Activated naive CD4-positive, alpha-beta T cell treated with anti-CD3 and anti-CD28 coated beads for 36 hours (primary cell): ENCODE measurements at regions of chr2 and their contacts with region 1.

Region 1: DNA sequence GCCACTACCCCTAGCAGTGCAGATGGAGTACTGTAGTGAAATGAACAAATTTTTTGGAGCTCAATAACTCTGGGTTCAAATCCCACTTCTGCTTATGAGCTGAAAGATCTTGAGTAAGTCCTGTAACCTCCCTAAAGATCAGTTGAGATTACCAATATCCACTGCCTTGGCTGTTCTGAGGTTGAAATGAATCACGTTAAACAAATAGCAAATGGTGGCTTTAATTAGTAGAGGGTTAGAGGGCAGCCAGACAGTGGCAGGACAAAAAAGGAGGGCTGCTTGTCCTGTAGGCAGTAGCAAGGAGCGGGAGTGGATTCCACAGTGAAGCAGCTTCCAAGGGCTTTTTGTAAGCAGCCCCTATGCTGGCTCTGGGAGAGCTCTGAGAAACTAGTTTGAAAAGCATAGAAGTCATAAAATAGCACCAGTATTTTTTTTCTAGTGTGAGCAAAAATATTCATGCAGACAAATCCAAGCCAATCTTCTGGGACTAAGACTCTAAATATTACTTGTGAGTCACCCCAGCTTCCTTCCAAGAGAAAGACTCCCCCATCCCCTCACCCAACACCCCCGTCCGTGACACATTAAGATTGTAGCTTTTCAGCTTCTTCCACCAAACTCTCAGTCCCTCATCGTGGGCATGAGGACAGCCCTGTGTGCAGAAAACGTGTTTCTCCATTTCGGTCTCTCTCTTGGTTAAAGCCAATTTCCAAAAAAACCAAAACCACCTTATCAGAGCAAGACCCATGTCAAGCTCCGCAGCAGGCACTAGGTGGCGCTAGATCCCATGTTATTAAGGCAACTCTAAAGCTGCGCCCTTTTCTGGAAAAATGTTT is 123.5 kb upstream of the LGALSL start:
- DNase-seq: peak; percentile 89
- H3K4me3 Mint-ChIP-seq: no peak overlapping the region
- H3K27ac Mint-ChIP-seq: no peak overlapping the region
- H3K4me1 Mint-ChIP-seq: peaks cover 41% of the 10 kb centered on the region
- H3K27me3 Mint-ChIP-seq: no peaks in the 10 kb centered on the region

Region 2: DNA sequence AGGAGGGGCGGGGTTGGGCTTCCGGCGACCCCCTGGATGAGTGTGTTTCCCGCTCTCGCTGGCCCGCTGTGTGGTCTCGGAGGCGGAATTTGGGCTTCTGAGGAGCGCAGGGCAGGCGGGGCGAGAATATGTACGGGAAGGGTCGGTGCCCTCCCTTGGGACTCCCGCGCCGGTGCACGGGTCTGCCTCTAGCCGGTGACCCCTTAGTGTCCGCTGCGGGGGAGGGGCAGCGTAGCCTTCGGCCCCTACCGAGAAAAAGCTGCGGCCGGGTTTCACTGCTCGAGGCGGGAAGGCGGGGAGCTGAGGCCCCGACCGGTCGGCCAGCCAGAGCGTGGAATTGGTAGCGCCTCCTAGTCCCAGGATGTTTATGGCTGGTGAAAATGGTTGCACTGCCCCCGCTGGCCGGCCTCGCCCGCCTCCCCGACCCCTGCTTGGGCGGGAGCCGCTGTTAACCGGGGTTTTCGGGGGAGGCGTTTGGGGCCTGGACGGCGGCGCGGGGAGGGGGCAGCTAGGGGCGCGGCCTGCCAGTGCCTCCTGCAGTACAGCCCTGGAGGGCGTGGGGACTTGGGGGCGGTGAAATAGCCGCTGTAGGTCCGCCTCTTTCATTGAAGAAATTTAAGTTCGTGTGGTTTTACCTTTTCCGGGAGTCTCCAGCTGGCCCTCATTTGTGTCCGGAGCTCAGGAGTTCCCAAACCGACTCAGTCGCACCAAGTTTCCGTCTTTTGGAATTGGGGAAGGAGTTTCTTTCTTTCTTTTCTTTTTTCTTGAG is 489.1 kb before region 1 on chr2 and contains the start of gene UGP2:
- CTCF ChIA-PET with region 1: interaction called, 5 read pairs
- intact Hi-C with region 1: loop called (anchors 1 kb)
- DNase-seq: peak; percentile 88
- H3K4me3 Mint-ChIP-seq: peak within 1 kb of the TSS; percentile 99
- H3K27ac Mint-ChIP-seq: peak within 1 kb of the TSS; percentile 99
- H3K4me1 Mint-ChIP-seq: peaks cover 37% of the 10 kb centered on the region
- H3K27me3 Mint-ChIP-seq: no peaks in the 10 kb centered on the region
- total RNA-seq, gene UGP2: 82.2 to 93.1 TPM

Region 3: GRCh38 chr2:64052468-64053241 is 277.8 kb before region 1 on chr2:
- CTCF ChIA-PET with region 1: interaction called, 350 read pairs
- intact Hi-C with region 1: loop called (anchors 1 kb)
- DNase-seq: peak; percentile 38
- H3K4me3 Mint-ChIP-seq: no peak overlapping the region
- H3K27ac Mint-ChIP-seq: peak overlapping the region; percentile 8
- H3K4me1 Mint-ChIP-seq: peaks cover 39% of the 10 kb centered on the region
- H3K27me3 Mint-ChIP-seq: no peaks in the 10 kb centered on the region

Region 4: GRCh38 chr2:64144057-64145013 is 186.2 kb before region 1 on chr2 and contains the start of gene PELI1:
- CTCF ChIA-PET with region 1: interaction called, 21 read pairs
- intact Hi-C with region 1: loop called (anchors 1 kb)
- DNase-seq: peak; percentile 98
- H3K4me3 Mint-ChIP-seq: peak within 1 kb of the TSS; percentile 94
- H3K27ac Mint-ChIP-seq: peak within 1 kb of the TSS; percentile 94
- H3K4me1 Mint-ChIP-seq: peaks cover 31% of the 10 kb centered on the region
- H3K27me3 Mint-ChIP-seq: no peaks in the 10 kb centered on the region
- total RNA-seq, gene PELI1: 25.7 to 28.0 TPM

Region 5: DNA sequence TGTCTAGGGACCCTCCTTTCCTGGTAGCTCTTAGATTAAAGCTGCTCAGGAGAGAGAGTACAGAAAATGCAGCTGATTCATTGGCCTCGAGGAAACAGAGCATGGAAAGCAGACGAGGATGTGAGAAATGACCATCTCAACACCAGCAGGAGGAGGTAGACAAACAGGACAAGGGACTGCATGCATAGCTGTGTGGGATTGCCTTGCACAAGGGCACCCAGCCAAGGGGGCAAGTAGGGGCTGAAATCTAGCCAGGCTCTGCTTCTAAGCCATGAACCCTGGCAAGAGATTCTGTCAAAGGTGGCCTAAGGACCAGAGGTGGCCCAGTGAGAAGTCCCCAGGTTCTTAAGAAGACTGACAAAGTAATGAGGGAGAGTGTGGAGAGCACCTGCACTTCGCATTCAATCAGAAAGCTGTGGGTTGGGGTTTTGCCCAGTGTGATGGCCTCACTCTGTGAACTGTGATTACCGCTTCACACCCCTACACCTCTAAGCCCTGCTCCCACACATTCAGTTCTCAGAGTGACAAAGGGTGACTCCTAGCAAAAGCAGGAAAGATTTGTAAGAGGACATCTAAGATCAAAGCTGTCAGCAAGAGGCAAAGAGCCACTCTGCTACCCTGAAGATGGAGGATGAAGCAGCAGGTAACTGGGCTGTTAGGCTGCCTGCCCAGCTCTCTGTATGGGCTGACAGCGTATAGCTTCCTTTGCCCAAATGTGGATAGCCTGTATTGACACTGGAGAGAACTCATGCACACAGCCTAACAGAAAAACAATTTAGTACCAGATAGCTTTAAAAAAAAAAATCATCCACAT is 35.0 kb before region 1 on chr2:
- CTCF ChIA-PET with region 1: interaction called, 9 read pairs
- intact Hi-C with region 1: loop called (anchors 1 kb)
- DNase-seq: peak; percentile 73
- H3K4me3 Mint-ChIP-seq: no peak overlapping the region
- H3K27ac Mint-ChIP-seq: no peak overlapping the region
- H3K4me1 Mint-ChIP-seq: peaks cover 16% of the 10 kb centered on the region
- H3K27me3 Mint-ChIP-seq: peaks cover 4% of the 10 kb centered on the region

Region 6: GRCh38 chr2:64498438-64498837 is 167.9 kb after region 1 on chr2:
- CTCF ChIA-PET with region 1: interaction called, 17 read pairs
- intact Hi-C with region 1: no loop called
- DNase-seq: no peak
- H3K4me3 Mint-ChIP-seq: no peak overlapping the region
- H3K27ac Mint-ChIP-seq: no peak overlapping the region
- H3K4me1 Mint-ChIP-seq: no peaks in the 10 kb centered on the region
- H3K27me3 Mint-ChIP-seq: peaks cover 5% of the 10 kb centered on the region

Region 7: DNA sequence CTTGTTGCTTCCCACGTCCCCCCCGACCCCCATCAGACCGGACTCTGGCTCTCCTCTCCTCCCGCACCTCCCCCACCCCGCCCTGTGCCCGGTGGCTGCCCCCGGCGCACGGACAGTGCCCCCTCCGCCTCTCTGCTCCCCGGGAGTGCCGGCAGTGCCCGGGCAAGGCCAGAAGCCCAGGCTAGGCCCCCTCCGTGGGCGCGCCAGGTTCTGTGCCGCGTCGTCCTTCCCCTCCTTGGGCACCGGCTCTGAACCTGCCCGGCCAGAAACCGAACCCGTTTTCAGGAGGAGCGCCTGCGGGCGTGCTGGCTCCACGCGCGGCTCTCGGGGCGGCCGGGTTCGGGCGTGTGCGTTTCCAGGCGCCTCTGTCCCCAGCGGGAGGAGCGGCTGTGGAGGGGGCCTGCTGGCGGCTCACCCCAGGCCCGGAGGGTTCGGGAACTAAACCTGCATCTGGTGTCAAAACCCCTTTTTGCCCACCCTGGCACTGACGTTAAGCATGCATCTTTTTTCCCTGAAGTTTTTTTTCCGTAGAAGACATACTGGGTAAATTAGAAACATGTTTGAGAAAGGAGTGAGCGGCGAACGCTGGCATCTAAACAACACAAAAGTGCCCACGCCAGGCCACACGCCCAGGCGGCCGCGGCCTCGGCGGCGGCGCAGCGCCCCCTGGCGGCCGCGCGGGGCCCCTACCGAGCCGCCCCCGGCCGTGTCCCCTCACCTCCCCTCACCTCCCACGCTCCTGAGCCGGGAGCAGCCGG is 534.8 kb after region 1 on chr2:
- CTCF ChIA-PET with region 1: interaction called, 6 read pairs
- intact Hi-C with region 1: loop called (anchors 1 kb)
- DNase-seq: peak; percentile 59
- H3K4me3 Mint-ChIP-seq: peak overlapping the region; percentile 55
- H3K27ac Mint-ChIP-seq: no peak overlapping the region
- H3K4me1 Mint-ChIP-seq: no peaks in the 10 kb centered on the region
- H3K27me3 Mint-ChIP-seq: peaks cover 3% of the 10 kb centered on the region